ENCODE measurements at regions of chr20 and their contacts with region 1.

Region 1: DNA sequence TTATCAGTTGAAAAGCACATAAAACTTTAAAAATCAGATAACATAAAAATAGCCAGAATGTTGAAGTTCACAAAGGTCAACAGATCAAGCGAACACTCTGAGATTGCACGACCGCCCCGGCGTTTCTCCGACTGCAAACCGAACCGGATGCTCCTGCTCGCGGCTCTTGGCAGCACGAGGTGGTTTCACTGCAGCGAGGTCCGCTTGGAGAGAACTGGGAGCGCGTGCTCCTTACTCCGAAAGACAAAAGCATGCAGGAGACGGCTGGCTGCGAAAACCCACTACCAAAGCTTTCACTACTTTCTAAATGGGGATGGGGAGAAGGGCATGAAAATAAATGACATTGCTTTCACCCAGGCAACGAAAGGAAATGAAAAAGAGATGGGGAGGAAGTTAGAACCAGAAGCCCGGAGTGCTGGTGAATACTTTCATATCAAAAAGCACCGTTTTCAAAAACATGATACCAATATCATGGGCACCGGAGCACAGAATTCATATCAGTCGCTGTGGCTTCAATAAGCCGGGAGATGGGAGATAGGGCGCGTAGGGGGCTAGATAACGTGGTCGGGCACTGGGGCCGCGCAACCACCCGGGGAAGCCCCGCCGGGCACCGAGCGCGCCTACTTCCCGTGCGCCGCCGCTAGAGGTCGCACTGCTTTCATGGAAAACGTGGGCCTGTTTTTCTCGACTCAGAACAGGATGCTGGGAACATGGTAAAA is 8.3 kb upstream of the ANKRD60 start:
- DNase-seq: peak; percentile 79
- H3K4me3 Mint-ChIP-seq: peak overlapping the region; percentile 83
- H3K27ac Mint-ChIP-seq: peak overlapping the region; percentile 84
- H3K4me1 Mint-ChIP-seq: peaks cover 30% of the 10 kb centered on the region
- H3K27me3 Mint-ChIP-seq: no peaks in the 10 kb centered on the region

Region 2: DNA sequence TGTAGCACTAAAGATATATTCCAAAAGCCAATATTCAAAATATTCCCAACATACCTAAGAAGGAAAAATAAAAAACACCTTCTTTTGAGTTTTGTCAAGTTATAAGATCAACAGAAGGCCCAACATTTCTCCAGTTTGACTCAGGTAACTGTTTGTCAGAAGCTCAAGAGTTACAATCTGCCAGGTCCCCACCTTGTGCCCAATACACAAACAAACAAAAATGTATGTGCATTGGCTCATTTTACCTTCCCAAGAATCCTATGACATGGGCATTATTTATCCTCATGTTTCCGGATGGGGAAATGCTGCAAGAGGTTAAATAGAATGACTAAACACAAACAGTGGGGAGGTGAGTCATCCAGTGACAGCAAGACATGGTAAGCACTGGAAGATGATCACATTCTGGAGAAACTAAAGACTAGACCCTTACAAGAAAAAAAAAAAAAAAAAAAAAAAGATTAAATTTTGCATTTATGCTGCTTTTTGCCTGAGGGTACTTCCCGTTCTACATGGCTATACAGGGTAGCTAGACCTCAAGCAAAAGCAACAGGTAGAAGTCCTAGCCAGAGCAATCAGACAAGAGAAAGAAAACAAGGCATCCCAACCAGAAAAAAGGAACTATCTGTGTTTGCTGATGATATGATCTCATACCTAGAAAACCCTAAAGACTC is 15.3 kb after region 1 on chr20:
- intact Hi-C with region 1: loop called (anchors 1 kb)
- DNase-seq: no peak
- H3K4me3 Mint-ChIP-seq: no peak overlapping the region
- H3K27ac Mint-ChIP-seq: peak overlapping the region; percentile 36
- H3K4me1 Mint-ChIP-seq: peaks cover 43% of the 10 kb centered on the region
- H3K27me3 Mint-ChIP-seq: no peaks in the 10 kb centered on the region

Region 3: GRCh38 chr20:58407966-58408557 is 171.3 kb after region 1 on chr20:
- intact Hi-C with region 1: loop called (anchors 1 kb)
- DNase-seq: peak; percentile 11
- H3K4me3 Mint-ChIP-seq: peak overlapping the region; percentile 65
- H3K27ac Mint-ChIP-seq: peak overlapping the region; percentile 87
- H3K4me1 Mint-ChIP-seq: peaks cover 36% of the 10 kb centered on the region
- H3K27me3 Mint-ChIP-seq: no peaks in the 10 kb centered on the region

Region 4: GRCh38 chr20:58818585-58819285 is 582.0 kb after region 1 on chr20:
- intact Hi-C with region 1: loop called (anchors 1 kb)
- DNase-seq: peak; percentile 55
- H3K4me3 Mint-ChIP-seq: peak overlapping the region; percentile 20
- H3K27ac Mint-ChIP-seq: peak overlapping the region; percentile 53
- H3K4me1 Mint-ChIP-seq: peaks cover 16% of the 10 kb centered on the region
- H3K27me3 Mint-ChIP-seq: peaks cover 41% of the 10 kb centered on the region

Region 5: DNA sequence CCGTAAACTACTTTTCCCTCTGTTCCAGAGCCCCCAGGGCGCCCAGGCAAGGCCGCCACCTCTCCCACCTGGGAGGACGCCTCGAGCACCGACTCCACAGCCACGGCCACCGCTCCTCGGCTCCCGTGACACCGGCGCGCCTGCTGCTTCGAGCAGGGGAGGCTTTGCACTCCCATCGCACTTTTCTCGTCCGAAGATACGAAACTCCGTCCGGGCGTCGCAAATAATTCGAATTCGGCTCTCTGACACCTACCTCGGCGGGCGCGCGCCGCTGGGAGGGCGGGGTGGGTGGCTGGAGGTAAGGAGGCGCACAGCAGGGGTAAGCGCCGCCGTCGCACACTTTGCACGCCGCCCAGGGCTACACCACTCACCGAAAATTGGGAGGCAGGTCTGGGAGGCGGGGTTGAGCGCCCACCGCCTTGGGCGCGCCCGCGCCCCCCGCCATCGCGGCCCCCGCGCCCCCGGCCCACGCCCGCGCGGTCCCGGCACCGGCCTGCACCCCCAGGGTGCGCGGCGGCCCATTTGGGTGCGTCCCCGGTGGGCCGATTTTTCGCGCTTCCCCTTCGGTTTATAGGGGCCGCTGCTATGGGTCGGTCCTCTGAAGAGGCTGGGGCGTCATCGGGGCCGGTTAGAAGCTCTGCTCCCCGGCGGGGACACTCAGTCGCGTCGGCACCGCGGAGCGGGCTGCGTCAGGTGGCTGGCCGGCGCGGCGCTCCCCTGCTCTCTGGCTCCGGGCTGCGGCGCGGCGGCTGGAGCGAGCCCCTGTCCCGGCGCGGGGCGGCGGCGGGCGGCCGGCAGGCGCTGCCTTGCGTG is 652.0 kb after region 1 on chr20:
- intact Hi-C with region 1: loop called (anchors 10 kb)
- DNase-seq: peak; percentile 79
- H3K4me3 Mint-ChIP-seq: peak overlapping the region; percentile 81
- H3K27ac Mint-ChIP-seq: peak overlapping the region; percentile 40
- H3K4me1 Mint-ChIP-seq: peaks cover 33% of the 10 kb centered on the region
- H3K27me3 Mint-ChIP-seq: no peaks in the 10 kb centered on the region

Measured in activated T-helper 1 cell treated with anti-CD3 and anti-CD28 coated beads, Interleukin-12 subunit alpha, Interleukin-12 subunit beta, Interleukin-2, Interleukin-4 antibody, amounts not matched to agents 30 ng/mL and 10 ng/mL and 1 ng/mL, durations not matched to agents 14 hours and 24 hours and 36 hours (primary cell).